MCF 10A (cell line): ENCODE measurements at regions of chr14 and their contacts with region 1.

Region 1: GRCh38 chr14:40164083-40164482 is 731.9 kb upstream of the FBXO33 start:
- DNase-seq: no peak
- H3K4me3 Mint-ChIP-seq: no peak overlapping the region
- H3K27ac Mint-ChIP-seq: no peak overlapping the region
- H3K4me1 Mint-ChIP-seq: no peaks in the 10 kb centered on the region
- H3K27me3 Mint-ChIP-seq: no peaks in the 10 kb centered on the region
- CTCF ChIP-seq: no peak

Region 2: GRCh38 chr14:40122968-40123648 is 41.0 kb before region 1 on chr14:
- CTCF ChIA-PET with region 1: no interaction called
- POLR2A ChIA-PET with region 1: interaction called, 13 read pairs
- intact Hi-C with region 1: no loop called
- DNase-seq: peak; percentile 17
- H3K4me3 Mint-ChIP-seq: no peak overlapping the region
- H3K27ac Mint-ChIP-seq: no peak overlapping the region
- H3K4me1 Mint-ChIP-seq: peaks cover 6% of the 10 kb centered on the region
- H3K27me3 Mint-ChIP-seq: no peaks in the 10 kb centered on the region
- CTCF ChIP-seq: no peak

Region 3: DNA sequence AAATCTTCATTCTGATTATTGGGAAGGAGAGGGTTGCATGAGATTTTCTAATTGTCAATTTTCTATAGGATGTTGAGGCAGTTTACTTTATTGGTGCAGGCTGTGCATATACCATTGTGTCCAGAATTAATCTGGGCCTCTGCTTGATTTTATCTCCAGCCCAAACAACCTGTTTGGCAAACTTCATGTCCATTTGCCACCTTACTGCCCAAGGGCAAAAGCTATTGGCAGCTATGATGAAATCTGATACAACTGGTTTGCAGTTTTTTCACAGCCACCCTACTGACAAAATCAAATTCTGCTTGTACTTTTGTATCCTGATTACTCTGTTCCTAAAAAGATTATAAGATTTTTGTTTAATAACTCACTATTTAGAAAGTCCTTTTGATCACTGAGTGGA is 57.3 kb after region 1 on chr14:
- CTCF ChIA-PET with region 1: no interaction called
- POLR2A ChIA-PET with region 1: interaction called, 10 read pairs
- intact Hi-C with region 1: no loop called
- DNase-seq: peak; percentile 65
- H3K4me3 Mint-ChIP-seq: no peak overlapping the region
- H3K27ac Mint-ChIP-seq: no peak overlapping the region
- H3K4me1 Mint-ChIP-seq: peaks cover 16% of the 10 kb centered on the region
- H3K27me3 Mint-ChIP-seq: no peaks in the 10 kb centered on the region
- CTCF ChIP-seq: no peak

Region 4: GRCh38 chr14:40232302-40232701 is 68.2 kb after region 1 on chr14:
- CTCF ChIA-PET with region 1: no interaction called
- POLR2A ChIA-PET with region 1: no interaction called
- intact Hi-C with region 1: no loop called
- DNase-seq: no peak
- H3K4me3 Mint-ChIP-seq: no peak overlapping the region
- H3K27ac Mint-ChIP-seq: no peak overlapping the region
- H3K4me1 Mint-ChIP-seq: no peaks in the 10 kb centered on the region
- H3K27me3 Mint-ChIP-seq: no peaks in the 10 kb centered on the region
- CTCF ChIP-seq: no peak